Activated CD4-positive, alpha-beta memory T cell treated with anti-CD3 and anti-CD28 coated beads for 36 hours (primary cell): ENCODE measurements at regions of chr12 and their contacts with region 1.

Region 1: GRCh38 chr12:75511116-75512048 is at the start of gene KRR1:
- DNase-seq: peak; percentile 95
- H3K4me3 Mint-ChIP-seq: peak within 1 kb of the TSS; percentile 99
- H3K27ac Mint-ChIP-seq: peak within 1 kb of the TSS; percentile 98
- H3K4me1 Mint-ChIP-seq: peaks cover 31% of the 10 kb centered on the region
- H3K27me3 Mint-ChIP-seq: no peaks in the 10 kb centered on the region
- total RNA-seq, gene KRR1: 96.6 to 106 TPM

Region 2: DNA sequence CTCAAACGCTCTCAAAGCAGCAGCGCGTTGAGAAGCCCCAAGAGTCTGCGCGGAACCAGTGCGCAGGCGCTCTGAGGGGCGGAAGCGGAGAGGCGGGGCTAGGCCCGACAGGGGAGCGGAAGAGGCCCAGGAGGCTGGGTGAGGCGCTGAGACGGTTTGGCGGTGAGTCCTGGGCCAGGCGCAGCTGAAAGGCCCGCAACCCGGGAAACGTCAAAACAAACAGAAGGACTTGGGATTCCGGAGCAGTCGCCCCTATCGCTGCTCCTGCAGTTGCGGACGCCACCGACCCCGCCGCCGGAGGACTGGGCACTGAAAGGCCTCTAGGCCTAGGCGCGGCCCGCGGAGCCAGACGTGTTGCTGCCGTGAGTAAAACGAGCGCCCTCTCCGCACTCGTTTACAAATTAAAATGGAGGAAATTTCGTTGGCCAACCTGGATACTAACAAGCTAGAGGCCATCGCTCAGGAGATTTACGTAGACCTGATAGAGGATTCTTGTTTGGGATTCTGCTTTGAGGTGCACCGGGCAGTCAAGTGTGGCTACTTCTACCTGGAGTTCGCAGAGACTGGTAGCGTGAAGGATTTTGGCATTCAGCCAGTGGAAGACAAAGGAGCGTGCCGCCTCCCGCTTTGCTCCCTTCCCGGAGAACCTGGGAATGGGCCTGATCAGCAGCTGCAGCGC is 973.5 kb before region 1 on chr12 and contains the start of gene ATXN7L3B:
- CTCF ChIA-PET with region 1: no interaction called
- POLR2A ChIA-PET with region 1: no interaction called
- intact Hi-C with region 1: loop called (anchors 5 kb)
- DNase-seq: peak; percentile 97
- H3K4me3 Mint-ChIP-seq: peak within 1 kb of the TSS; percentile 92
- H3K27ac Mint-ChIP-seq: peak within 1 kb of the TSS; percentile 94
- H3K4me1 Mint-ChIP-seq: peaks cover 48% of the 10 kb centered on the region
- H3K27me3 Mint-ChIP-seq: no peaks in the 10 kb centered on the region
- total RNA-seq, gene ATXN7L3B: 16.7 to 17.0 TPM

Region 3: DNA sequence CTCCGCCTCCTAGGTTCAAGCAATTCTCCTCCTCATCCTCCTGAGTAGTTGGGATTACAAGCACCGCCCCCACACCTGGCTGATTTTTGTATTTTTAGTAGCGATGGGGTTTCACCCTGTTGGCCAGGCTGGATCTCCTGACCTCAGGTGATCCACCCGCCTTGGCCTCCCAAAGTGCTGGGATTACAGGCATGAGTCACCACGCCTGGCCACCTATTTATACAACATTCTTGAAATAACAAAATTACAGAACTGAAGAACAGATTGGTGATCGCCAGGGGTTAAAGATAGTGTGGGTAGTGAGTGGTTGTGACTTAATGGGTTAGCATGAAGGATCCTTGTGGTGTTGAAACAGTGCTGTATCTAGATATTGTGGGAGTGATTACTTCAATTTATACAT is 169.6 kb before region 1 on chr12:
- CTCF ChIA-PET with region 1: no interaction called
- POLR2A ChIA-PET with region 1: no interaction called
- intact Hi-C with region 1: loop called (anchors 1 kb)
- DNase-seq: no peak
- H3K4me3 Mint-ChIP-seq: no peak overlapping the region
- H3K27ac Mint-ChIP-seq: no peak overlapping the region
- H3K4me1 Mint-ChIP-seq: peaks cover 12% of the 10 kb centered on the region
- H3K27me3 Mint-ChIP-seq: peaks cover 12% of the 10 kb centered on the region

Region 4: GRCh38 chr12:75489613-75490210 is 21.7 kb before region 1 on chr12:
- CTCF ChIA-PET with region 1: interaction called, 21 read pairs
- POLR2A ChIA-PET with region 1: interaction called, 8 read pairs
- intact Hi-C with region 1: loop called (anchors 1 kb)
- DNase-seq: peak; percentile 58
- H3K4me3 Mint-ChIP-seq: no peak overlapping the region
- H3K27ac Mint-ChIP-seq: peak overlapping the region; percentile 72
- H3K4me1 Mint-ChIP-seq: peaks cover 45% of the 10 kb centered on the region
- H3K27me3 Mint-ChIP-seq: no peaks in the 10 kb centered on the region

Region 5: DNA sequence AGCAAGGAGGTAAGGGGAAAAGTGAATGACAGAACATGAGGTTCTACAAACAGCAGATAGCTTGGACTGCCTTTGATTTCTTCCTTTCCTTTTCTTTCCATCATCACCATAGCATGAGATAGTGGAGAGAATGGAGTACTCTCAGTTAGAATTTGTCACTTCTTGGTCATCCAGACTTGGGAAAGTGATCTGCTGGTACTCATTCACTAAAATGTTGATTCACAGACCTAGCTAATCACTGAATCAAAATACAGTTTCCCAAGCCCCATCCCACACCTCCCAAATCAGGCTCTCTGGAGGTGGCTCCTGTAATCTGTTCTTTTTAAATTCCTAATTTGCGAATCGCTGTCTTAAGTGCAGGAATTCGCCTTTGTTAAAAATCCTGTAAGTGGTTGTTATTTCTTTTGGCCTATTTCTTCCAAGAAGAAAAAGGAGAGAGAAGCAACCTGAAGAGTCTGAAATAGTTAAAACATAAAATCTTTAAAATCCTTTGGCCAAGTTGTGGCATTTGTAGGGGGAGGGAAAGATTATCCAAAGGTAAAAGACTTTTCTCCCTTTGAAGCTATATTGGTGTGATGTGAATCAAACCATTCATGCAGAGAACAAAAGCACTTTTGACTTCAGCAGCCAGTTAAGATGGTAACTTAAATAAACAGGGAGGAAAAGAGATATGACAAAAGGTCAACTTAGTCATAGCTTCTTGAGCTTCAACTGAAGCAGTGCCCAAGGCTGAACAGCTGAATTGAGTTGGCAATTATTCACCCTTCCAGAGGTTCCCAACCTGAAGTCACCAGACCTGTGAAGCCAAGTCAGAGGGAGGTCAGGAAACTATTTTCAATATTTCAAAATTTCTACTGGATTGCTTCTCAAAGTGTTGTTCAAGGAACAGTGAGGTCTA is 255.1 kb after region 1 on chr12:
- CTCF ChIA-PET with region 1: no interaction called
- POLR2A ChIA-PET with region 1: no interaction called
- intact Hi-C with region 1: no loop called
- DNase-seq: no peak
- H3K4me3 Mint-ChIP-seq: no peak overlapping the region
- H3K27ac Mint-ChIP-seq: no peak overlapping the region
- H3K4me1 Mint-ChIP-seq: no peaks in the 10 kb centered on the region
- H3K27me3 Mint-ChIP-seq: peaks cover 7% of the 10 kb centered on the region

Region 6: DNA sequence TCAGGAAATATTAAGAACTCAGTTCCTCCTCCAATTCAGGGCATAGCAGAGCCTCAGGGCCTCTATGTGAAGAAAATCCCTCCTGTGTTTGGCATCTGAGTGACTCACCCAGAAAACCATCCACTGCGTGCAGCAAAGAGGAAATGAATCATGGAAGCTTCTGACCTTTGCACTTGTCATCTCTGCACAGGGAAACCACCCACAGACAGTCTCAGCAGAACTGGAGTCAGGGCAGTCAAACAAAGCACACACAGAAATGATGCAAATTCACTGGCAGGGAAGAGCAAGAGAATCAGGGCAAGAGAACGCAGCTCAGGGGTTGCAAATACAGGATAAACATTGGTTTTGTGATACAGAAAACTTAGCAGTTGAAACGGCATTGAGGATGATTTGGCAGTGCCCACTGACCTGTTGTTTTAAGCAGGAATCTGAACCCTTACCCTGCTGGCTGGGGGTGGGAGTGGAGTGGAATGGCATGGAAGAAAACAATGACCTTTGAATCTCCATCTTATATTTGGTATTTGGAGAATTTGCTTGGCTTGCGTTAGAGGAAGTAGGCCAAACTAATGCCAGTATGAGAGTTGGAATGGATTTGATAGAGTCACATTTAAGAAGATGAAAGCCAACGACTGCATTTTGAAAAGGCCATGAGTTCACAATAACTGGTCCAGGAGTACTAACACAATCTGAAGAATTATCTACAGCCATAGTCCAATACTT is 466.7 kb after region 1 on chr12:
- CTCF ChIA-PET with region 1: no interaction called
- POLR2A ChIA-PET with region 1: no interaction called
- intact Hi-C with region 1: loop called (anchors 2 kb)
- DNase-seq: peak; percentile 88
- H3K4me3 Mint-ChIP-seq: peak overlapping the region; percentile 34
- H3K27ac Mint-ChIP-seq: peak overlapping the region; percentile 97
- H3K4me1 Mint-ChIP-seq: peaks cover 63% of the 10 kb centered on the region
- H3K27me3 Mint-ChIP-seq: no peaks in the 10 kb centered on the region

Region 7: GRCh38 chr12:76559400-76560085 is 1048.2 kb after region 1 on chr12 and contains the start of gene OSBPL8:
- CTCF ChIA-PET with region 1: no interaction called
- POLR2A ChIA-PET with region 1: no interaction called
- intact Hi-C with region 1: loop called (anchors 2 kb)
- DNase-seq: peak; percentile 98
- H3K4me3 Mint-ChIP-seq: peak within 1 kb of the TSS; percentile 88
- H3K27ac Mint-ChIP-seq: peak within 1 kb of the TSS; percentile 97
- H3K4me1 Mint-ChIP-seq: peaks cover 34% of the 10 kb centered on the region
- H3K27me3 Mint-ChIP-seq: no peaks in the 10 kb centered on the region
- total RNA-seq, gene OSBPL8: 69.8 to 73.7 TPM